Calu3 (cell line): ENCODE measurements at regions of chr9 and their contacts with region 1.

Region 1: DNA sequence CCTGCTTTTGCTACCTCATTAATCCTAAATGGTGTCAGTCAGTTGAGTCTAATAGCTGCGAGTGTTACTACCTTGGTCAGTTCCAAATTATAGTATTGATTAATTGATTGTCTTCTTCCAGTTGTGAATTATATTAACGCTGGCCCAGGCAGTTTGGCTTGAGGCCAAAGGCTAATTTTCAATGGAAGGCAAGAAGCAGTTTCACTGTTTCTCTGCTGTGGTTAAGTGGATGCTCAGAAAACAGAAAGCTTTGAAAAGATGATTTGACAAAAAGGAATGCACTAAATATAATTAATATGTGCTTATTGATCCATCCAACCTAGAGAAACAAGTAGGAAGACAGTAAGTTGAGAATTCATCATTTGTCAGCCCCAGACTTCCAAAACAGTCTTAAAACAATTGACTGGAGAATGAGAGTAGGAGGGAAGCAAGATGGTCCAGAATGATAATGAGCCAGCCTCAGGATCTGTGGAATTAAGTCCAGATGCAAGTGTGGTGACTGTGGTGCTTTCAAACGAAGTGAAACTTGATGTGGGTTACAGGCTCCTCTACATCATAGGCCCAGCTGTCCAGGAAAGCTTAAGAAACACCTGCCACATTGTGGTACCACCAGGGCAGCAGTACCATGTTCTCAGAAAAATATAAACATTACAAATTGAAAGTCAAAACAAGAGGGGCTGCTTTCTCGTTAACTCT is 1371.0 kb upstream of the DMAC1 start:
- DNase-seq: no peak
- H3K4me3 Mint-ChIP-seq: no peak overlapping the region
- H3K27ac Mint-ChIP-seq: no peak overlapping the region
- H3K4me1 Mint-ChIP-seq: no peaks in the 10 kb centered on the region
- H3K27me3 Mint-ChIP-seq: no peaks in the 10 kb centered on the region
- CTCF ChIP-seq: no peak

Region 2: DNA sequence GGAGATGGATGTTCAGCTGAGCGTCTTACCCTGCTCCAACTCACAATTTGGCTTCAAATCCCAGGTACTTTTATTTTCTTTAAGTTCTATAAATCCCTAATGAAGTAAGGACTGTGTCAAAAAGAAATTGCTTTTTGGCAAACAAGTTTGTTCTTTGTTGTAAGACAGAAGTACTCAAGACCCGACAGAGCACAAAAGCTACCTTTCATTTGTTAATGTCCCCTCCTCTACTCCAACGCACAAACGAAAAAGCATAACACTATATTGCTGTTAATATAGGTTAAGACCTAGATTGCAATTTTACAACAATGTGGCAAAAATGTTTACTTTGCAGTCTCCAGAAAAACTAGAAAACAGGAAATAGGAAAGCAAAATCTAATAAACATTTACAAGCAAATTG is 775.6 kb before region 1 on chr9:
- CTCF ChIA-PET with region 1: no interaction called
- intact Hi-C with region 1: loop called (anchors 5 kb)
- DNase-seq: no peak
- H3K4me3 Mint-ChIP-seq: no peak overlapping the region
- H3K27ac Mint-ChIP-seq: no peak overlapping the region
- H3K4me1 Mint-ChIP-seq: no peaks in the 10 kb centered on the region
- H3K27me3 Mint-ChIP-seq: no peaks in the 10 kb centered on the region
- CTCF ChIP-seq: no peak

Region 3: DNA sequence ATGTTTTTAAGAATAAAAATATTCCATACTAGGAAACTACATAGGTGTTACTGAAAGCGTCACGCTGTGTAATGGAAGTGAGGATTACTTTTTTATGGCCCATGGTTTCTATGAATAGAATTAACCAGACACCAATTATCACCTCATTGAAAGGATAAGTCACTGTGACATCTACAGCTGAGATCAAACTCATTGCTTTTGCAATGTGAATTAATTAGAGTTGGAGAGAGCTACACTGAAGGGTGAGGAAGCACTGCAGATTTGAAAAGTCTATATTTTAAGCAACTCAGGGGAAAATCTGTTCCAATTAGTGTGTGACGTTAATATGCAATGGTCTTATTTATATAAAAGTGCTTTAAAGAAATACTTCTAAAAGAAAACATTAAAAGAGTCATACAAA is 70.9 kb before region 1 on chr9:
- CTCF ChIA-PET with region 1: no interaction called
- intact Hi-C with region 1: loop called (anchors 10 kb)
- DNase-seq: no peak
- H3K4me3 Mint-ChIP-seq: no peak overlapping the region
- H3K27ac Mint-ChIP-seq: no peak overlapping the region
- H3K4me1 Mint-ChIP-seq: no peaks in the 10 kb centered on the region
- H3K27me3 Mint-ChIP-seq: no peaks in the 10 kb centered on the region
- CTCF ChIP-seq: no peak